ENCODE measurements at regions of chr5 and their contacts with region 1.

Region 1: DNA sequence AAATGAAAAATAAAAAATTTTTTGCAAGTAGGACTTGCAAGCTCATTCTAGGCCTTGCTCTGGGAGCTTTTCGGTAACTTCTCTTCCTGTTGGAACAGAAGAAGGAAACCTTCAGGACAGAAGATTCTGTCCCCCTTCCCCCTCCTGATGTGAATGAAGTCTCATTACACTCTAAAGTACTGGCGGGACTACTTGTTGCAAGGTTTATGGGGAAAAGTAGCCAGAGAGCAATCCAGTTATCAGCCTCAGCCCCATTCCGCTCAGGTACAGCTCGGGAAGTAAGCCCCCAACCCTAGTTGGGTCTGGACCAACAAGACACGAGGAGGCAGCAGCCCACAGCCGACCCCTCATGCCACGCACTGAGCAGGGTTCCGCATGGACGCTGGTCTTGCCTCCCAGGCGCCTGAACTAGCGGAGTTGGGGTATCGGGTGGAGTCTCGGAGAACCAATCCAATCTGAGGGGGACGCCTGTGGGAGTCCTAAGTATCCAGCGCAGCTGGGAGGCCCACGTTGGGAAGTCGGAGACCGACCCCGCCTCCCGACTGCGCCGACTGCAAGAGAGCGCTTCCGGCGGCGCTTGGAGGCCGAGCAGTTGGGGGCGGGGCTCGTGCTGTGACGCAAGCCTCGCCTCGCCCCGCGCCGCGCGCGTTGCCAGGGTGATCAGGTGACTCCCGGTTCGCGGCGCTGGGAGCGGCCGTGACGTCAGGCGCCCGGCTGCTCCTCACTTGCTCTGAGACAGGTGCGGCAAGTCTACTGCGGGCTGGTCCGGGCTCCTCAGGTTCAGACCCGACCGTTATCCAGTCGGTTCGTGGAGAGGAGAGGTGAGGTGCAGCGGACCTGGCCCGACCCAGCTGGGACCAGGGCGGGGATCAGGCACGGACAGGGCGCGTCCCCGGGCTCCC is at the start of gene CYSTM1:
- DNase-seq: peak; percentile 94 to 98 (median 97)
- H3K4me3 ChIP-seq: peak within 1 kb of the TSS; percentile 74 to 77
- H3K4me3 Mint-ChIP-seq: peak within 1 kb of the TSS; percentile 91 to 97 (median 93)
- H3K27ac ChIP-seq: peak within 1 kb of the TSS; percentile 89
- H3K27ac Mint-ChIP-seq: peak within 1 kb of the TSS; percentile 92 to 99 (median 98)
- H3K4me1 ChIP-seq: peaks cover 12% of the 10 kb centered on the region
- H3K4me1 Mint-ChIP-seq: peaks cover 7 to 23% (median 11%) of the 10 kb centered on the region in 4 donors
- H3K27me3 ChIP-seq: no peaks in the 10 kb centered on the region
- H3K27me3 Mint-ChIP-seq: no peaks in the 10 kb centered on the region
- total RNA-seq, gene CYSTM1: 5.0 to 6.3 TPM

Region 2: GRCh38 chr5:140094889-140095288 is 79.8 kb before region 1 on chr5:
- CTCF ChIA-PET with region 1: no interaction called
- POLR2A ChIA-PET with region 1: no interaction called
- intact Hi-C with region 1: no loop called
- DNase-seq: no peak
- H3K4me3 ChIP-seq: no peak overlapping the region
- H3K4me3 Mint-ChIP-seq: no peak overlapping the region
- H3K27ac ChIP-seq: no peak overlapping the region
- H3K27ac Mint-ChIP-seq: no peak overlapping the region
- H3K4me1 ChIP-seq: no peaks in the 10 kb centered on the region
- H3K4me1 Mint-ChIP-seq: no peaks in the 10 kb centered on the region
- H3K27me3 ChIP-seq: no peaks in the 10 kb centered on the region
- H3K27me3 Mint-ChIP-seq: peaks cover 13 to 16% of the 10 kb centered on the region in 2 donors

Region 3: DNA sequence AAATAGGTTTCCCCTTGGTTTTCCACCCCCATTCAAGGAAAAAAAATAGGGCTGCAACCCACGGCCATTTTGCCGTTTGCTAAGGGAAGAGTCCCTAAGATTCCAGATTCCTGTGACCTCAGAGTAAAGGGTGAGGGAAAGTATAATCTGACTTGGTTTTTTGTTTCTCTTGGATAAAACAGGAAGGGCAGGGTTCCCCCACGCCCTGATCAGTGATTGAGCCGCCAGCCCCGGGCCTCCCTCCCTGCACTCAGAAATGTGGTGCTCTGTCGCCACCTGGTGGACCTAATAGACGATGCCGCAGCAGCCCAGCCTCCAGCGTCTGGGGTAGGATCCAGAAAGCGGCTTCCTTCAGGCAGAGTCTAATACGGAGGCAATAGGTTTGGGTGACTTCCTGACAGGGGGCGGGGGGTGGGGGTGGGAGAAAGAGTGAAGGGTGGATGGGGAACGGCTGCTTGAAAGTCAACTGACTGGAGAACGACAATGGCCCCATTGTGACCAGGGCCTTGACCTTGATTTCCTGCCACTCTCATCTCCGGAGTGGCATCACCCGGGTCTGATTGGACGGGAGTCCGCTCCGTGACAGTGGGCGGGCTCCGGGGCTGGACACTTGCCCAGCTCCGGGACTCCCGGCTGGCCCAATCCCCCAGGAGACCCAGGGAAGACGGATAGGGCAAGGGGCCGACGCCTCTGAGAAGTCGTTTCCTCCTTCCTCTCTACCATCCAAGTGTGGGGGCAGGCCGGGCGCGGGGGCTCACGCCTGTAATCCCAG is 17.5 kb before region 1 on chr5:
- CTCF ChIA-PET with region 1: interaction called, 3 read pairs
- POLR2A ChIA-PET with region 1: interaction called, 4 read pairs
- intact Hi-C with region 1: loop called (anchors 1 kb)
- DNase-seq: peak; percentile 77 to 82 (median 82)
- H3K4me3 ChIP-seq: no peak overlapping the region
- H3K4me3 Mint-ChIP-seq: peak overlapping the region; percentile 52 to 79 (median 60)
- H3K27ac ChIP-seq: no peak overlapping the region
- H3K27ac Mint-ChIP-seq: peak overlapping the region in 6 of 7 donors; percentile 19 to 88 (median 30)
- H3K4me1 ChIP-seq: peaks cover 11% of the 10 kb centered on the region
- H3K4me1 Mint-ChIP-seq: peaks cover 2 to 15% (median 9%) of the 10 kb centered on the region in 4 donors
- H3K27me3 ChIP-seq: no peaks in the 10 kb centered on the region
- H3K27me3 Mint-ChIP-seq: no peaks in the 10 kb centered on the region

Region 4: GRCh38 chr5:140302786-140303639 is 128.3 kb after region 1 on chr5 and contains the start of gene PFDN1:
- CTCF ChIA-PET with region 1: no interaction called
- POLR2A ChIA-PET with region 1: interaction called, 3 read pairs
- intact Hi-C with region 1: loop called (anchors 1 kb)
- DNase-seq: peak; percentile 89 to 94 (median 92)
- H3K4me3 ChIP-seq: peak within 1 kb of the TSS; percentile 87 to 92
- H3K4me3 Mint-ChIP-seq: peak within 1 kb of the TSS; percentile 96 to 100 (median 100)
- H3K27ac ChIP-seq: peak within 1 kb of the TSS; percentile 81
- H3K27ac Mint-ChIP-seq: peak within 1 kb of the TSS; percentile 85 to 99 (median 99)
- H3K4me1 ChIP-seq: peaks cover 16% of the 10 kb centered on the region
- H3K4me1 Mint-ChIP-seq: peaks cover 15 to 26% (median 23%) of the 10 kb centered on the region in 4 donors
- H3K27me3 ChIP-seq: no peaks in the 10 kb centered on the region
- H3K27me3 Mint-ChIP-seq: peaks cover 0 to 3% of the 10 kb centered on the region in 2 donors
- total RNA-seq, gene PFDN1: 24.8 to 26.2 TPM

Region 5: DNA sequence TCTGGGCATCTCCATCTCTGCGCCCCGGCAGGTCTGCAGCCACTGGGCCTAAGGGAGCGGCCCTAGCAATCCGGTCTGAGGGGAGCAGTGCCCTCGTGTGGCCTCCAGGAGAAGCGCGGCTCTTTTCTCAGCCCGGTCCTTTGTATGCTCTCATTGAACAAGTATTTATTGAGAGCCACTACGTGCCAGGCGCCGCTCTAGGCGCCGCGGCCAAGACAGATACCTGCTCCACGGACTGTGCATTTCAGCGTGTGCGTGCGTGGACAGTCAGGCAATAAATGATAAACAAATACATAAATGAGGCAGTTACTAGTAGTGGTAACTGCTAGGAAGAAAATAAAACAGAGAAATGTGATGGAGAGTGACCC is 183.0 kb after region 1 on chr5:
- CTCF ChIA-PET with region 1: no interaction called
- POLR2A ChIA-PET with region 1: no interaction called
- intact Hi-C with region 1: loop called (anchors 10 kb)
- DNase-seq: peak; percentile 66 to 73 (median 72)
- H3K4me3 ChIP-seq: peak overlapping the region in 1 of 2 donors; percentile 46
- H3K4me3 Mint-ChIP-seq: peak overlapping the region; percentile 76 to 91 (median 84)
- H3K27ac ChIP-seq: no peak overlapping the region
- H3K27ac Mint-ChIP-seq: peak overlapping the region in 6 of 7 donors; percentile 68 to 93 (median 82)
- H3K4me1 ChIP-seq: peaks cover 13% of the 10 kb centered on the region
- H3K4me1 Mint-ChIP-seq: peaks cover 9 to 17% (median 11%) of the 10 kb centered on the region in 4 donors
- H3K27me3 ChIP-seq: no peaks in the 10 kb centered on the region
- H3K27me3 Mint-ChIP-seq: peaks cover 0 to 2% of the 10 kb centered on the region in 2 donors

Measured in CD4-positive, alpha-beta memory T cell (primary cell).